IMR-90 (cell line): ENCODE measurements at regions of chr4 and their contacts with region 1.

Region 1: DNA sequence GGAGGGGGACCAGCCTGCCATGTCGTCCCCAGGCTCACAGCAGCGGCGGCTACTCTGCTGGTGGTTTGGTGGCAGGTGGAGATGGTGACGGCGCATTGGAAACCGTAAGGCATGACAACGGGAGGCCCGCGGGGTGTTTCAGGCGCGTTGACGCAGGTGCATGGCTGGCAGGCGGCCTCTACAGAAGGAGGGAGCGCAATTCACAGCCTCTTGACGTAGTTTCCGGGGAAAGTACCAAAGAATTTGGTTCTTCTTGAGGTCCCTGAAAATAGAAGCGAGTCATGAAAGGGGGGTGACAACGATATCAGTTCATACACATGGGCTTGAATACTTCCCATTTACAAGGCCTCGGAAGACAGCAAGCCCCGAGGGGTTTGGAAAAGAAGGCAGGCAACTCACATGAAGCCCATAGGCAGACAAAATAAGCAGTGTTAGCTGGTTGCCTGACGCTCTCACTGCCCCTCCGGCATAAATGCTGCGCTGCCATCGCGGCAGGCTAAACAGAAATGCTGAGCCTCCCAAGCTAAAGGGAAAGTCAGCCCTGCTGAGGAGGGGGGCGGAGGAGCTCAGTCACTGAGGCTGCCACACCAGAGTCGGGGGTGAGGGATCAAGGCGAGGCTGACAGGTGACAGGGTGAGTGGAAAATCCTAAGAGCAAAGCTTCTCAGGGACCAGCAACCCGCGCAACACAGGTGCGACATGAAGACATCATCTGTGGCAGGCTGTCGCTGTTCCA is 52.3 kb upstream of the PDLIM3 start:
- DNase-seq: peak; percentile 68
- ATAC-seq: no peak
- H3K4me3 ChIP-seq: no peak overlapping the region
- H3K27ac ChIP-seq: no peak overlapping the region
- H3K4me1 ChIP-seq: no peaks in the 10 kb centered on the region
- H3K27me3 ChIP-seq: peaks cover 14% of the 10 kb centered on the region
- CTCF ChIP-seq: no peak
- POLR2A ChIP-seq: no peak
- RAD21 ChIP-seq: no peak

Region 2: DNA sequence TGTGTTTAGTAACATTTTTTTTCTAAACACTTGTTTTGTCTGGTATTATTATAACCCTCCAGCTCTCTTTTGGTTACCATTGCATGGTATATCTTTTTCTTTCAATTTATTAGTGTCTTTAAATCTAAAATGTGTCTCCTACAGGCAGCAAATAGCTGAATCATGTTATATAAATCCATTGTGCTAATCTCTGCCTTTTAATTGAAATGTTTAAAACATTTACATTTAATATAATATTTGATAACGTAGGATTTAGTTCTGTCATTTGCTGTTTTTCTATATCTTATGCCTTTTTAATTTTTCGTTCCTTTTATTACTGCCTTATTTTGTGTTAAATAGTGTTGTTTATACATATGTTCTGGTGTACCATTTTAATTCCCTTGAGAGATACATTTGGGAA is 98.9 kb before region 1 on chr4:
- CTCF ChIA-PET with region 1: no interaction called
- POLR2A ChIA-PET with region 1: no interaction called
- dilution Hi-C with region 1: no loop called
- in situ Hi-C with region 1: loop called (anchors 5 kb)
- intact Hi-C with region 1: no loop called
- DNase-seq: no peak
- ATAC-seq: no peak
- H3K4me3 ChIP-seq: no peak overlapping the region
- H3K27ac ChIP-seq: no peak overlapping the region
- H3K4me1 ChIP-seq: no peaks in the 10 kb centered on the region
- H3K27me3 ChIP-seq: no peaks in the 10 kb centered on the region
- CTCF ChIP-seq: no peak
- POLR2A ChIP-seq: no peak
- RAD21 ChIP-seq: no peak

Region 3: DNA sequence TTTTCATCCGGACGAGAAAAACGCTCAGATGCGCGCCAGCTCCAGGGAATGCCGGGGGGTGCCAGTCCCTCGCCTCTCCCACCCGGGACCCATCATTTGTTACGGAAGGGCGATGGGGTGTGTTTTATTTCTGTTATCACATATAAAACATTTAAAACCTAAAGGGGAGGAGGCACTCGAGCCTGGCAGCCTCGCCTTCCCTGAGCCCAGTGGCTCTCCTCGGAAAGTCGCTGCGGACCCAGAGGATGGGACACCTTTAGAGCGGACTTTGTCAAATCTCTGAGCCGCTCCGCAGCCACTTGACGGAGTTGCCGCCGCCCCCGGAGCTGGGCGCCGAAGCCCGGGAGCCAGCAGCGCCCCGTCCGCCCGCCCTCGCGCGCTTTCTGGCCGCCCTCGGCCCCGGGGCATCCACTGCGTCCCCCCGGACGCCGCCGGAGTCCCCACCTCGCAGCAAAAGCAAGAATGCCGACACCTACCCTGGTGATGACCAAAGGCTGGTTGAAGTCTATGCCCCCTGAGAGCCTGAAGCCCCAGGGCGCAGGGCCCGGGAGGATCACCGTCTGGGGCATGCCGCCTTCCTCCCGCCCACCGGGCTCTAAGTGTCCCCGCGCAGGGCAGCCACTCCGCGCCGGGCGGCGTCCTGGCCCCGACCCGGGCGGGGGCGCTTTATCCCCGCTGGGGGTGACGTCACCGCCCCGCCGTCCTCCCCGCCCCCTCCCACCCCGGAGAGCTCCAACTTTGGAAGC is 52.6 kb before region 1 on chr4 and contains the start of gene PDLIM3:
- CTCF ChIA-PET with region 1: no interaction called
- POLR2A ChIA-PET with region 1: no interaction called
- dilution Hi-C with region 1: no loop called
- in situ Hi-C with region 1: no loop called
- intact Hi-C with region 1: loop called (anchors 5 kb)
- DNase-seq: peak; percentile 30
- ATAC-seq: peak; percentile 83
- H3K4me3 ChIP-seq: peak within 1 kb of the TSS; percentile 96
- H3K27ac ChIP-seq: peak within 1 kb of the TSS; percentile 23
- H3K4me1 ChIP-seq: peaks cover 2% of the 10 kb centered on the region; the same call in 1 of the 2 replicates
- H3K27me3 ChIP-seq: peaks cover 5% of the 10 kb centered on the region
- CTCF ChIP-seq: no peak
- POLR2A ChIP-seq: peak; percentile 74
- RAD21 ChIP-seq: no peak
- total RNA-seq, gene PDLIM3: 8.9 and 11.7 TPM in 2 replicates

Region 4: DNA sequence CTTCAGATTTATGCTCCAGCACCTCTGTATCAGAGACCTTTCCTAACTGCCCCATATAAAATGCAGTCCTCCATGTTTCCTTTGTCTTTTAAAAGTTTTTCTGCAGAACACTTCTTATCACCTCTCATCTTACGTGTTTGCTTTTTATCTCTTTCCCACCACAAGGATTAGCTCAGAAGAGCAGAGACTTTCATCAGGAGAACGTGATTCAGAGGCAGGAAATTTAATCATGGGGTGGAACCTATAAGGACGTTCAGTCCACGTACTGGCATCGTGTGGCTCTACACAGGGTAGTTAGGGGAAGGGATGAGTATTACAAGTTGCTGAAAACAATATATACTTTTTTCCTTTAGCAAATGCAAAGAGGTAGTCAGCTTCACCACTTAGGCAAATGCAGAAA is 125.7 kb after region 1 on chr4:
- CTCF ChIA-PET with region 1: no interaction called
- POLR2A ChIA-PET with region 1: interaction called, 15 read pairs
- dilution Hi-C with region 1: no loop called
- in situ Hi-C with region 1: no loop called
- intact Hi-C with region 1: no loop called
- DNase-seq: no peak
- ATAC-seq: no peak
- H3K4me3 ChIP-seq: no peak overlapping the region
- H3K27ac ChIP-seq: no peak overlapping the region
- H3K4me1 ChIP-seq: peaks cover 2% of the 10 kb centered on the region; the same call in 1 of the 2 replicates
- H3K27me3 ChIP-seq: peaks cover 7% of the 10 kb centered on the region
- CTCF ChIP-seq: no peak
- POLR2A ChIP-seq: no peak
- RAD21 ChIP-seq: no peak